ENCODE measurements at regions of chr22 and their contacts with region 1.

Region 1: GRCh38 chr22:30104501-30105156 is 24.4 kb downstream of the HORMAD2 start:
- DNase-seq: peak; percentile 79
- H3K4me3 Mint-ChIP-seq: peak overlapping the region; percentile 54
- H3K27ac Mint-ChIP-seq: peak overlapping the region; percentile 89
- H3K4me1 Mint-ChIP-seq: peaks cover 45% of the 10 kb centered on the region
- H3K27me3 Mint-ChIP-seq: no peaks in the 10 kb centered on the region

Region 2: GRCh38 chr22:30253205-30253852 is 148.7 kb after region 1 on chr22:
- intact Hi-C with region 1: loop called (anchors 1 kb)
- DNase-seq: no peak
- H3K4me3 Mint-ChIP-seq: peak overlapping the region; percentile 9
- H3K27ac Mint-ChIP-seq: peak overlapping the region; percentile 69
- H3K4me1 Mint-ChIP-seq: peaks cover 50% of the 10 kb centered on the region
- H3K27me3 Mint-ChIP-seq: no peaks in the 10 kb centered on the region